ENCODE measurements at regions of chr12 and their contacts with region 1.

Region 1: GRCh38 chr12:66169221-66170170 is at the start of gene TMBIM4:
- DNase-seq: peak; percentile 68 to 91 (median 86)
- ATAC-seq: peak; percentile 85
- H3K4me3 ChIP-seq: peak within 1 kb of the TSS; percentile 80
- H3K4me3 Mint-ChIP-seq: peak within 1 kb of the TSS; percentile 89 to 100 (median 95)
- H3K27ac ChIP-seq: peak within 1 kb of the TSS; percentile 97
- H3K27ac Mint-ChIP-seq: peak within 1 kb of the TSS; percentile 94 to 98 (median 97)
- H3K4me1 ChIP-seq: peaks cover 10 to 24% of the 10 kb centered on the region in 2 donors
- H3K4me1 Mint-ChIP-seq: peaks cover 38 to 62% (median 52%) of the 10 kb centered on the region in 7 donors
- H3K27me3 ChIP-seq: no peaks in the 10 kb centered on the region
- H3K27me3 Mint-ChIP-seq: no peaks in the 10 kb centered on the region
- total RNA-seq, gene TMBIM4: 38.6 to 88.0 (median 79.8) TPM

Region 2: DNA sequence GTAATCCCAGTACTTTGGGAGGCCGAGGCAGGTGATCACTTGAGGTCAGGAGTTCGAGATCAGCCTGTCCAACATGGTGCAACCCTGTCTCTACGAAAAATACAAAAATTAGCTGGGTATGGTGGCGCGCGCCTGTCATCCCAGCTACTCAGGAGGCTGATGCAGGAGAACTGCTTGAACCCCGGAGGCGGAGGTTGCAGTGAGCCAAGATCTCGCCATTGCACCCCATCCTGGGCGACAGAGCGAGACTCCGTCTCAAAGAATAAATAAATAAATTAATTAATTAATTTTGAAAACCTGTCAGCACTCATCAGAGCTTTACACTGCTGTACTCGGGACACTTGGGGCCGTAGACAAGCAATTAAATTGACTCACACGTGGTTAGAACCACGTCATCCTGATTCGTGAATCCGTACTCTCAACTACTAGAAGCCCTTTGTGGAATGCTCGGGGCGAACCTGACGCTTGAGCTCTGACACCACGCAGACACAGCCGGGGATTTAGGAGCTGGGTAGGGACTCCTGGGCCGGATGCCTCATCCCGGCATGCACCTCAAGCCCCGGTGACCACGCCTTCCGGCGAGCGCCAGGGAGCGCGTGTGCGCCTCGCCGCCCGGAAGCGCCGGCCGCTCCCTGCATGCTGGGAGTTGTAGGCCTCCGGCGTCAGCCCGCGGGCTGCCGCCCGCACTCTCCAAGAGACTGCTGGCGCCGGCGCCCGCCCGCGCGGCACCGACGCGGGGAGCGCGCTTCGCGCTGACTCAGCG is 1765.6 kb before region 1 on chr12 and contains the start of gene XPOT:
- CTCF ChIA-PET with region 1: no interaction called
- POLR2A ChIA-PET with region 1: no interaction called
- intact Hi-C with region 1: loop called (anchors 1 kb)
- DNase-seq: peak; percentile 85 to 94 (median 92)
- ATAC-seq: peak; percentile 97
- H3K4me3 ChIP-seq: peak within 1 kb of the TSS; percentile 81
- H3K4me3 Mint-ChIP-seq: peak within 1 kb of the TSS; percentile 90 to 99 (median 96)
- H3K27ac ChIP-seq: peak within 1 kb of the TSS; percentile 82
- H3K27ac Mint-ChIP-seq: peak within 1 kb of the TSS; percentile 84 to 98 (median 95)
- H3K4me1 ChIP-seq: peaks cover 0 to 8% of the 10 kb centered on the region in 2 donors
- H3K4me1 Mint-ChIP-seq: peaks cover 8 to 41% (median 25%) of the 10 kb centered on the region in 7 donors
- H3K27me3 ChIP-seq: no peaks in the 10 kb centered on the region
- H3K27me3 Mint-ChIP-seq: no peaks in the 10 kb centered on the region
- total RNA-seq, gene XPOT: 46.6 to 118 (median 75.1) TPM

Region 3: DNA sequence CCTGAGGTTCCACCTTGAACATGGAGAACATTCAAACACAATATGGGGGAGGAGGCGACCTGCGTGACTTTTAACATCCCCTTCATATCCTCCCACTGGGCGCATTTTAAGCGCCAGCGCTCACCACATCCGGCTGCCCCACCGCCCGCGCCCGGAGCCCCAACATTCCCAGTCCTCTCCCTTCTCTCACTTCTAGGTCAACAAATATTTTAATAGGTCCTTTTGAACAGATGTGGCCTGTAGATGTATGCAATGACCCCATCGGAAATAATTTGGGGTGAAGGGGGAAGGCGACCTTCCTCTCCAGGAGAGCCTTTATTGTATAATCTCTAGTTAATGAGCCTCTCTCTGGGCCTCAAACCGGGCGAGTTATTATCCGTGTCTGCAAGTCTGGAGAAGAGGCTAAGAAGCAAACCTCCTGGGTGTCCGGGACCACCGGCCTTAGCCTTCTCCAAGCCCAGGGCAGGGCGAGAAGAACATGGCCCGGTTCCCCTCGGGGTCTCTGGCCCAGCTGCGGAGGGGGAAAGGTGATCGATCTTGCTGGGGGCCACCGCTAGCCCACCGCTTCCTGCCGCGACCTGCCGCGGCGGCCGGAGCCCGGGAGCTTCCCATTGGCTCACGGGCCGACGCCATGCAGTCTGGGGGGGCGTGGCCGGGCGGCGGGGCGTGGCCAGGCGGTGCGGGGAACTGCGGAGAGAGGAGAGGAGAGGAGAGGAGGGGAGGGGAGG is 428.5 kb before region 1 on chr12:
- CTCF ChIA-PET with region 1: no interaction called
- POLR2A ChIA-PET with region 1: no interaction called
- intact Hi-C with region 1: loop called in 1 of 2 experiments (anchors 5 kb)
- DNase-seq: peak; percentile 37 to 74 (median 50)
- ATAC-seq: peak; percentile 82
- H3K4me3 ChIP-seq: peak overlapping the region; percentile 32
- H3K4me3 Mint-ChIP-seq: peak overlapping the region; percentile 33 to 89 (median 82)
- H3K27ac ChIP-seq: no peak overlapping the region
- H3K27ac Mint-ChIP-seq: peak overlapping the region in 8 of 9 donors; percentile 4 to 88 (median 61)
- H3K4me1 ChIP-seq: no peaks in the 10 kb centered on the region
- H3K4me1 Mint-ChIP-seq: peaks cover 10 to 20% (median 14%) of the 10 kb centered on the region in 7 donors
- H3K27me3 ChIP-seq: no peaks in the 10 kb centered on the region
- H3K27me3 Mint-ChIP-seq: peaks cover 14 to 43% (median 25%) of the 10 kb centered on the region in 5 donors

Region 4: DNA sequence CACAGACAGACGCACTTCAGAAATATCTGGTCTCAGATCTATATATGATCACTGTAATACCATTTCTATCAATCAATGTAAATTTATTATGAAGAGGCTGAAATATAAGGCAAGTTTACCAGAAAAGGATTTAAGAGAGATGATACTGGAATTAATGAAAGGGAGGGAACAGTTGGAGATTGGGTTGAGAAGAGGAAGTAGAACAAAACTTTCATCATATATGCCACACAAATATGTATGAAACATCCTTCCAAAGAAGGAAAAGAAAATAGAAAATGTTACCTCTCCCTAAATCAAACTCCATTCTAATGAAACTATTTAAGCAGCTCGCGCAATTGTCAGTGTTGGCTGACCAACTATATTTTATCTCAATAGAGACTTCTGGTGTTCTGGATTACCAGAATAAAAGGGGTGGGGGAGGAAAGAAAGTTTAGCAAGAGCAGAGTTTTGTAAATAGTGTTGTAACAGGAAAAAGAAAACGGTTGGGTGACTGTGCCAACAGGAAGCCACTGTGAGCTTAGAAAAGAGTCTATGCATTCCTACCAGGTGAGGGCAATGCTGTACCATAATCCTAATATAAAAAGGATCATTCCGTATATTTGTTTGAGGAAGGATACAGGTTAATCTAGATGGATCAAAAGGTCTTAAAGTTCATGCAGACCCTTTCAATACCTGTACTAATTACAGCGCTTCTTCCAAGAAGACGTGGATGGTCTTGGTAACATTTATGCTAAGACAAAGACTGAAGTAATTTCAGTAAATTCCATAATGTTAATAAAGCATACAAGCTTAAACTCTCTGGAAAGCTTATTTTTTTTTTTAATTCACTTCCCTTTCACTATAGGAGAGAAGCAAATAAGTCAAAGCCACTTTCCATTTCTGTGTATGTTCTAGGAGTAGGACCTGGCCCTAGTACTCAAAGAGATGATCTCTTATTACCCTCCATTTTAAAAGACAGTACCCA is 24.4 kb before region 1 on chr12:
- CTCF ChIA-PET with region 1: no interaction called
- POLR2A ChIA-PET with region 1: interaction called, 6 read pairs
- intact Hi-C with region 1: loop called in 1 of 2 experiments (anchors 2 kb)
- DNase-seq: peak in 4 of 9 donors; percentile 10 to 32 (median 14)
- ATAC-seq: peak; percentile 86
- H3K4me3 ChIP-seq: no peak overlapping the region
- H3K4me3 Mint-ChIP-seq: peak overlapping the region in 1 of 10 donors; percentile 15
- H3K27ac ChIP-seq: no peak overlapping the region
- H3K27ac Mint-ChIP-seq: peak overlapping the region; percentile 3 to 86 (median 66)
- H3K4me1 ChIP-seq: peaks cover 0 to 3% of the 10 kb centered on the region in 2 donors
- H3K4me1 Mint-ChIP-seq: peaks cover 4 to 35% (median 30%) of the 10 kb centered on the region in 7 donors
- H3K27me3 ChIP-seq: no peaks in the 10 kb centered on the region
- H3K27me3 Mint-ChIP-seq: no peaks in the 10 kb centered on the region

Region 5: DNA sequence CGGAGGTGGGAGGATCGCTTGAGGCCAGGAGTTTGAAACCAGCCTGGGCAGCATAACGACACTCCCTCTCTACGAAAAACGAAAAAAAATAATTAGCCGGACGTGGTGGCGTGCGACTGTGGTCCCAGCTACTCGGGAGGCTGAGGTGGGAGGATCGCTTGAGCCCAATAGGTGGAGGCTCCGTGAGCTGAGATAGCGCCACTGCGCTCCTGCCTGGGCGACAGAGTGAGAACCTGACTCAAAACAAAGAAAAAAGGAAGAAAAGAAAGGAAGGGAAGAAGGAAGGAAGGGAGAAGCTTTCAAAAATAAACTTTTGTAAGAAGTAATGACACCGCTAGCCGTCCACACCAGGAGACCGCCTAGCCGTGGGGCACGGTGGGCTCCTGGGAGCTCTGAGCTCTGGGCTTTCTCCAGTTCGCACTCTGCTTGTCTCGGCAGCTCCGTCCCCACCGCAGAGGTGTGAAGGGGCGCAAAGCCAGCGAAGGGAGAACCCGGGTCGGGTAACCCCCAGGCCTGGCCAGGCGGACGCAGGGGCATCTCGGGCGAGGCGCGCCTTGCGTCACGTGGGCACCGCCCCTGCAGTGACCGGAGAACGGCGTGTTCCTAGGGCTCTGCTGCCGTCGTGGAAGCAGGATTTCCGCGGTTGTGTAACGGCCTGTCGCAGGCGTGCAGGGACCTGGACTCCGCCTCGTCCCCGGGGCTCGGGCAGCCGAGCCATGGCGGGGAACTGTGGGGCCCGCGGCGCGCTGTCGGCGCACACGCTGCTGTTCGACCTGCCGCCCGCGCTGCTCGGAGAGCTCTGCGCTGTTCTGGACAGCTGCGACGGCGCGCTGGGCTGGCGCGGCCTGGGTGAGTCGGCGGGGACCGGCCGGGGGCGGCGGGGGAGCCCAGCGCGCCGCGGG is 19.3 kb after region 1 on chr12 and contains the start of gene IRAK3:
- CTCF ChIA-PET with region 1: no interaction called
- POLR2A ChIA-PET with region 1: interaction called, 6 read pairs
- intact Hi-C with region 1: loop called in 1 of 2 experiments (anchors 2 kb)
- DNase-seq: peak in 8 of 9 donors; percentile 15 to 44 (median 22)
- ATAC-seq: peak; percentile 86
- H3K4me3 ChIP-seq: peak within 1 kb of the TSS; percentile 49
- H3K4me3 Mint-ChIP-seq: peak within 1 kb of the TSS; percentile 72 to 88 (median 82)
- H3K27ac ChIP-seq: no peak within 1 kb of the TSS
- H3K27ac Mint-ChIP-seq: peak within 1 kb of the TSS in 2 of 9 donors; percentile 7 to 29
- H3K4me1 ChIP-seq: peaks cover 0 to 5% of the 10 kb centered on the region in 2 donors
- H3K4me1 Mint-ChIP-seq: peaks cover 0 to 24% (median 8%) of the 10 kb centered on the region in 7 donors
- H3K27me3 ChIP-seq: peaks cover 9% of the 10 kb centered on the region in 2 donors
- H3K27me3 Mint-ChIP-seq: peaks cover 54 to 75% (median 59%) of the 10 kb centered on the region in 5 donors
- total RNA-seq, gene IRAK3: 0.19 to 28.8 (median 1.9) TPM

Region 6: DNA sequence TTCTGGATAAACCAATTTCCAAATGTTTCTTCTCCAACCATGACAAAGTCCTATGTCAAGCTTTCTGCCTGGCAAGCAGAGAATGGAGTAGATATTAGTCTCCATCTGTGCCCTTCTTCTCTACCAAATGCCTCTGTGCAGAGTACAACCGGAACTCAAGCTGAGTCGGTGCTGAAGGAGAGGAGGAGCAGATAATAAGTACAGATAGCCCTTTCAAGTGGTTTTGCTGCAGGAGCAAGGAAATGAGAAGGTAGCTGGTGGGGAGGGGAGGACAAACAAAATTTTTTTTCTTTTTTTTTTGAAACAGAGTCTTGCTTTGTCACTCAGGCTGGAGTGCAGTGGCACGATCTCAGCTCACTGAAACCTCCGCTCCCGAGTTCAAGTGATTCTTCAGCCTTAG is 118.6 kb after region 1 on chr12:
- CTCF ChIA-PET with region 1: interaction called, 4 read pairs
- POLR2A ChIA-PET with region 1: interaction called, 5 read pairs
- intact Hi-C with region 1: loop called (anchors 1 kb)
- DNase-seq: peak in 8 of 9 donors; percentile 48 to 93 (median 89)
- ATAC-seq: peak; percentile 96
- H3K4me3 ChIP-seq: peak overlapping the region; percentile 47
- H3K4me3 Mint-ChIP-seq: peak overlapping the region; percentile 57 to 82 (median 68)
- H3K27ac ChIP-seq: peak overlapping the region; percentile 4
- H3K27ac Mint-ChIP-seq: peak overlapping the region; percentile 70 to 96 (median 85)
- H3K4me1 ChIP-seq: peaks cover 57 to 80% of the 10 kb centered on the region in 2 donors
- H3K4me1 Mint-ChIP-seq: peaks cover 61 to 100% (median 84%) of the 10 kb centered on the region in 7 donors
- H3K27me3 ChIP-seq: no peaks in the 10 kb centered on the region
- H3K27me3 Mint-ChIP-seq: no peaks in the 10 kb centered on the region

Measured in naive thymus-derived CD4-positive, alpha-beta T cell (primary cell).